Transverse colon (tissue), 4 donors: ENCODE measurements at regions of chr7 and their contacts with region 1.

Region 1: DNA sequence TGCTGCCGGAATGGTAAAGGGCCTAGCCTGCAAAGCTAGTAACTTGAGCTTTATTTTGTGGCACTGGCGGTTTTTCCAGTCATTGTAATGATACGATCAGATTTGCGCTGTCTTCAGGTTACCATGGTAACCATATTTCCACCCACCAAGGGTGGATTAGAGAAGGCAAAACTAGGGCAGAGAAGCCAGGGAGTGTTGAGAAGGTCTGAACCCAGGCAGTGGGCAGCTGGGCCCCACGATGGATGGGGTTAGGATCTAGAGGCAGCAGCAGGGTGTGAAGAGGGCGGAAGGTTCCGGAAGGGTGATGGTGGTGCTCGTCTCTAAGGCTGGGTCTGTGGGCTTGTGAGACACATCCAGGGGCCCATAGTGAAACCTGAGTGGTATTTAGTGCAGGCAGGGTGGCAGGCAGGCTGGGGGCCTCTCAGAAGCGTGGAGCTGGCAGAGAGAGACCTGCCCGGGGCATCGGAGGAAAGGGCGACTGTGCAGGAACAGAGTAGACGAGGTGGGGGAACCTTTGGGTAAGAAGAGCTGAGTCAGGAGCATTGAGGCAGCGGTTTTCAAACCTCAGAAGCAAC is 87.9 kb upstream of the GTF2I start:
- DNase-seq: no peak
- H3K4me3 ChIP-seq: no peak overlapping the region
- H3K27ac ChIP-seq: no peak overlapping the region
- H3K4me1 ChIP-seq: peaks cover 0 to 7% (median 3%) of the 10 kb centered on the region in 4 donors
- H3K27me3 ChIP-seq: no peaks in the 10 kb centered on the region
- CTCF ChIP-seq: no peak
- EP300 ChIP-seq: no peak
- POLR2A ChIP-seq: no peak

Region 2: GRCh38 chr7:74417419-74417971 is 152.1 kb before region 1 on chr7:
- in situ Hi-C with region 1: no loop called
- intact Hi-C with region 1: loop called (anchors 10 kb)
- DNase-seq: peak; percentile 64
- H3K4me3 ChIP-seq: no peak overlapping the region
- H3K27ac ChIP-seq: no peak overlapping the region
- H3K4me1 ChIP-seq: peaks cover 0 to 6% (median 1%) of the 10 kb centered on the region in 4 donors
- H3K27me3 ChIP-seq: peaks cover 10% of the 10 kb centered on the region
- CTCF ChIP-seq: peak; percentile 95 to 97 (median 95)
- EP300 ChIP-seq: no peak
- POLR2A ChIP-seq: no peak